ENCODE measurements at regions of chr3 and their contacts with region 1.

Region 1: GRCh38 chr3:44338010-44338827 is at the start of gene TCAIM:
- DNase-seq: peak; percentile 99
- ATAC-seq: peak; percentile 98
- H3K4me3 ChIP-seq: peak within 1 kb of the TSS; percentile 63 to 83
- H3K27ac ChIP-seq: peak within 1 kb of the TSS; percentile 32 to 93
- H3K4me1 ChIP-seq: peaks cover 0 to 4% of the 10 kb centered on the region in 2 donors
- H3K27me3 ChIP-seq: no peaks in the 10 kb centered on the region
- total RNA-seq, gene TCAIM: 22.0 to 26.0 TPM

Region 2: GRCh38 chr3:44058022-44058867 is 280.0 kb before region 1 on chr3:
- intact Hi-C with region 1: no loop called
- DNase-seq: no peak
- ATAC-seq: no peak
- H3K4me3 ChIP-seq: no peak overlapping the region
- H3K27ac ChIP-seq: no peak overlapping the region
- H3K4me1 ChIP-seq: no peaks in the 10 kb centered on the region
- H3K27me3 ChIP-seq: no peaks in the 10 kb centered on the region

Region 3: DNA sequence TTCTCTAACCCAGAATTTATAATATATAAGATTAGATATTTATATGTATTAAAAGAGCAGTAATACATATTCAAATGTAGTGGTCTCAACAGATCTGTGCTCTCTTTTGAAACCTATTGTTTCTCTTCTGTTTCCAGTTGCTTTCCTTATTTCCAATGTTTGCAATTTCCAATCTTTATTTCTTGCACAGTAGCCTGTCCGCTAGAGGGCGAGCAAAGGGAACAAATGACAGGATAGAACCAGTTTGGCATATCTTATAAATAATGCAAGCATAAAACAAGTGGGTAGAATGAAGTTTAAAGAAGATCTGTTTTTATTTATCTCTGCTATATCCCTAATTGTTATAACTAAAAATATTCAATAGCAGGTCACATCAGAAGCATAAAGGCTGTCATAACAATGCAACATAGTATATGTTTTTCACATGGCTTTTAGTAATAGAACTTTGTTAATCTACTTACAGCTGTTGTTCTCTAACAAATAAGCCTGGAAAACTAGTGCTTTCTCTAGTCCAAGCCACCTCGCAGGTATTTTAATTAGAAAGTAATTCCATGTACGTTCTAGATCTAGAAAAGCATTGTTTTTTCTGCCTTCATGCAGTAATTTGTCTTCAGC is 14.8 kb before region 1 on chr3:
- intact Hi-C with region 1: loop called in 1 of 2 experiments (anchors 1 kb)
- DNase-seq: peak; percentile 63 to 77
- ATAC-seq: peak; percentile 78
- H3K4me3 ChIP-seq: no peak overlapping the region
- H3K27ac ChIP-seq: no peak overlapping the region
- H3K4me1 ChIP-seq: peaks cover 0 to 1% of the 10 kb centered on the region in 2 donors
- H3K27me3 ChIP-seq: no peaks in the 10 kb centered on the region

Region 4: DNA sequence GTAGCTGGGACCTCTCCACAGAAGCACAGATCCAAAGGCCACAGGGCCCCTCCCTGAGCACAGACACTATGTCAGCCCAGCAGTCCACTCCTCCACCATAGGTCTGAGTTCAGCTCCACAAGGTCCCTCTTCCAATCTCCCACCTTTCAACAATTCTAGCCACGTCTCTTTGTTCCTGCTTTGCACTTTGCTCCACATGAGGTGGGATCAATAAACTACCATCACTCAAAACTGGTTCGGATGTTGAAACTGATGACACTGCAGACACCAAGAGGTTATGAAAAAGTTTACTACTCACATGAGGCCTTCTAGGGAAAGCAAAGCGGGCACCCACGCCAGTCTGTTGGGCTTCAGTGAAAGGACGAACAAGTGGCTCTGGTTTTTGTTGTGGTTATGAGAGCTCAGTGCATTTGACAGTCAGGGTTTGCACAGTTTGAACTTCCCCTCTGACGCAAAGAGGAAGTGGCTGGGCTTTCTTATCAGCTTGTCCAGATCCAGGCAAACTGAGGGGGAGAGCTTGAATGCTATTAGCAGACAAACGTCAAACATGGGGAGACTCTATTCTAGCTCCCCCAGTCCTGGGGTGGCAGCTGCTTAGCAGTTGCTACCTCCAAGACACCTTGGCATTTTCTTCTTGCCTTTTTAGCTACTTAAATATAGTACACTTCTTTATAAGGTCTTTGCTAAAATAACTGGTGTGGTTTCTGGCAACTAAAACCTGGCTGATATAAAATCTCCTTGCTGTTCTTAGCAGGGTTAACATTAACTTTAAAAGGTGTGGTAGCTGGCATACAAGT is 101.5 kb after region 1 on chr3:
- intact Hi-C with region 1: loop called in 1 of 2 experiments (anchors 5 kb)
- DNase-seq: peak; percentile 79 to 87
- ATAC-seq: peak; percentile 89
- H3K4me3 ChIP-seq: no peak overlapping the region
- H3K27ac ChIP-seq: peak overlapping the region; percentile 70 to 99
- H3K4me1 ChIP-seq: peaks cover 0 to 5% of the 10 kb centered on the region in 2 donors
- H3K27me3 ChIP-seq: no peaks in the 10 kb centered on the region

Region 5: GRCh38 chr3:44477312-44478030 is 139.3 kb after region 1 on chr3 and contains the start of gene ZNF445:
- intact Hi-C with region 1: loop called in 1 of 2 experiments (anchors 10 kb)
- DNase-seq: peak; percentile 87 to 94
- ATAC-seq: peak; percentile 96
- H3K4me3 ChIP-seq: peak within 1 kb of the TSS; percentile 84 to 100
- H3K27ac ChIP-seq: no peak within 1 kb of the TSS
- H3K4me1 ChIP-seq: peaks cover 0 to 6% of the 10 kb centered on the region in 2 donors
- H3K27me3 ChIP-seq: no peaks in the 10 kb centered on the region
- total RNA-seq, gene ZNF445: 18.6 to 26.4 TPM

Region 6: DNA sequence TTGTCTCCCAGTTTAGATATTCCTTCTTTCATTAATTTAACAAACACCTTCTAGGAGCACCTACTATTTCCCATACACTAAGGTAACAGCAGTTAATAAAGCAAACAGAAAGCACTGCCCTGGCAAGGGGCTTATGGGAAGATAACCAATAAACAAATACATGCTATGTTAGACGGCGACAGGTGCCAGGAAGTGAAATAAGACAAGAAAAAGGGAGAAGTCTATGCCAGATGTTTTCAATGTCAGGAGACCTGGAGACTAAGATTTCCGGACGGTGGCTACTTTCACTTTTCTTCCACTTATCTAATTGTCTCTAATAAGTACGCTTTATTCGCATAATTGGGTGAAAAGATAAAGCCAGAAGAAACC is 171.8 kb after region 1 on chr3:
- intact Hi-C with region 1: loop called in 1 of 2 experiments (anchors 10 kb)
- DNase-seq: no peak
- ATAC-seq: no peak
- H3K4me3 ChIP-seq: peak overlapping the region; percentile 86 to 100
- H3K27ac ChIP-seq: peak overlapping the region in 1 of 2 donors; percentile 79
- H3K4me1 ChIP-seq: no peaks in the 10 kb centered on the region
- H3K27me3 ChIP-seq: no peaks in the 10 kb centered on the region

Region 7: GRCh38 chr3:44976002-44976815 is 638.0 kb after region 1 on chr3 and contains the starts of genes EXOSC7 and ZDHHC3:
- intact Hi-C with region 1: loop called in 1 of 2 experiments (anchors 5 kb)
- DNase-seq: peak; percentile 92 to 96
- ATAC-seq: peak; percentile 96
- H3K4me3 ChIP-seq: peak within 1 kb of the TSS; percentile 71 to 95
- H3K27ac ChIP-seq: peak within 1 kb of the TSS in 1 of 2 donors; percentile 58
- H3K4me1 ChIP-seq: peaks cover 0 to 3% of the 10 kb centered on the region in 2 donors
- H3K27me3 ChIP-seq: no peaks in the 10 kb centered on the region
- total RNA-seq, gene EXOSC7: 30.7 to 31.2 TPM
- total RNA-seq, gene ZDHHC3: 60.5 to 62.2 TPM

Measured in aorta (tissue), 5 donors.